ENCODE measurements at regions of chr4 and their contacts with region 1.

Region 1: GRCh38 chr4:113547487-113548042 is 214.0 kb downstream of the CAMK2D start:
- DNase-seq: peak; percentile 97
- H3K4me3 Mint-ChIP-seq: no peak overlapping the region
- H3K27ac Mint-ChIP-seq: no peak overlapping the region
- H3K4me1 Mint-ChIP-seq: peaks cover 8% of the 10 kb centered on the region
- H3K27me3 Mint-ChIP-seq: no peaks in the 10 kb centered on the region
- CTCF ChIP-seq: peak; percentile 93

Region 2: DNA sequence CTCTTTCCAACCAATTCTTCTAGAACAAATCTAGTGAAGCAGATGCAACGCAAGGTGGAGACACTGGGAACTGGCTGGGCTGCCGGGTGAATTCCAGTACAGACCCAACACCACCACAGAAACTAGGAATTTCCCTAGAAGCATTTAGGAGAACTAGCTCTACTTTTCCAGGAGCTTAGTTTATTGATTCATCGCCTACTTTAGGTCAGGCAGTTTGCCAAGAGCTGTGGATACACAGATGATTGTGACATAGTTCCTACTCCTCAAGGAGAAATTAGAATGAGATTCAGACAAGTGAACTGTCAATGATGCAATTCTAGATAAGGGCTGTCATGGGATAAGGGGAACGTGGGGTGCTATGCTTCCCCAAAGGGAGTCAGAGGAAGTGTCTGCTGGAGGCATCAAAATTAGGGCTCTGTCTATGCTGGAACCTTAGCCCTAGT is 136.0 kb before region 1 on chr4:
- CTCF ChIA-PET with region 1: no interaction called
- POLR2A ChIA-PET with region 1: no interaction called
- intact Hi-C with region 1: loop called (anchors 5 kb)
- DNase-seq: peak; percentile 94
- H3K4me3 Mint-ChIP-seq: no peak overlapping the region
- H3K27ac Mint-ChIP-seq: peak overlapping the region; percentile 53
- H3K4me1 Mint-ChIP-seq: peaks cover 9% of the 10 kb centered on the region
- H3K27me3 Mint-ChIP-seq: no peaks in the 10 kb centered on the region
- CTCF ChIP-seq: peak; percentile 18

Region 3: DNA sequence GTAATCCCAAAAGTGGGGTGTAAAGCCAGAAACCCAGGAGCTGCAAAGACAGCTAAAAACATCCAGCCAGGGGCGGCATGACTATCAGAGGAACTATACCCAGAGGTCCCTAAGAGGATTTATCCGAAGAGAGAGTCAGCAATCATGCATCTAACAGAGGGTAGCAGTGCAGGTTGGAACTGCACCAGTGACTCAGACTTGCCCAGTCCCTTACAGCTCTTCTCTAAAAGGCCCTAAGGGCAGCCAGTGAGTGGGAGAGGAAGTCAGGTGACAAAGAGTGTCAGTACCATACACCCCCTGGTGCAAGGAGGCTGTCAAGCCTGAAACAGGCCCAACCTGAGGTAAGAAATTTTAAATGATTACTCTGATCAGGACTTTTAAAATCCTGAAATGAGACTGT is 125.9 kb after region 1 on chr4:
- CTCF ChIA-PET with region 1: interaction called, 4 read pairs
- POLR2A ChIA-PET with region 1: no interaction called
- intact Hi-C with region 1: loop called (anchors 10 kb)
- DNase-seq: peak; percentile 68
- H3K4me3 Mint-ChIP-seq: no peak overlapping the region
- H3K27ac Mint-ChIP-seq: no peak overlapping the region
- H3K4me1 Mint-ChIP-seq: peaks cover 37% of the 10 kb centered on the region
- H3K27me3 Mint-ChIP-seq: no peaks in the 10 kb centered on the region
- CTCF ChIP-seq: no peak